ENCODE measurements at regions of chr6 and their contacts with region 1.

Region 1: DNA sequence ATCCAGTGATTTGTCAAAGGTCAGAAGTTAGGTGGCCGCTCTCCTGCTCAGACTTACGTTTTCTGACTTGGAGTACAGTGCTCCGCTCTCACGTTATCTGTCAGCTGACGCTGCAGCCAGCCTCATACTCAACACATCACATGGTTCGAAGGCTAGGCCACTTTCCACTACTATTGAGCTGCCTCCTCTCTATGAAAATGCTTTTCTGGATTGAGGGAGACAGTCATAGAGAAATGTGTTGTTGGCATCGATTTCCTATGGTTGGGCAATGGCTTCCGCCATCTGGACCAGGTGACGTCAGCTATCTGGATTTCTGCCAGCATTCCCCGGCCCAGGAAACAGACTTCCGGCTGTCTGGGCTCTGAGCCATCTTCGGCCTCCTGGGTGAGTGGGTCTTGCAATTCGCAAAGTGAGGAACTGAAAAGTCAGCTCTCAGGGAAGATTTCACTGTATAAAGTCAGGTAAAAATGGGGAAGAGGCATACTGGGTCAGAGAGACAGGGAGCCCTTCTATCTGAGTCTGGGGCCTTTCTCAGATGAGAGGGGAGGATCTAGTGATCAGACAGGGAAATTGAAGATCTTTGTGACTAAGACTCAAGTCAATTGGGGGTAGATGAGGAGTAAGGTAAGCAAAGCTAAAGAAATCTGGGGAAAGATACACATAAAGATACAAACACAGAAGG is 37.5 kb upstream of the IER3 start:
- DNase-seq: peak; percentile 86
- H3K4me3 ChIP-seq: no peak overlapping the region
- H3K27ac ChIP-seq: peak overlapping the region; percentile 82
- H3K4me1 ChIP-seq: peaks cover 24% of the 10 kb centered on the region
- H3K27me3 ChIP-seq: no peaks in the 10 kb centered on the region
- CTCF ChIP-seq: no peak
- POLR2A ChIP-seq: peak; percentile 42

Region 2: GRCh38 chr6:30626484-30627366 is 155.2 kb before region 1 on chr6 and contains the start of gene ATAT1:
- CTCF ChIA-PET with region 1: no interaction called
- POLR2A ChIA-PET with region 1: no interaction called
- dilution Hi-C with region 1: no loop called
- intact Hi-C with region 1: no loop called
- DNase-seq: peak; percentile 89
- H3K4me3 ChIP-seq: peak within 1 kb of the TSS; percentile 22 to 64 (median 51)
- H3K27ac ChIP-seq: peak within 1 kb of the TSS; percentile 66
- H3K4me1 ChIP-seq: peaks cover 8% of the 10 kb centered on the region
- H3K27me3 ChIP-seq: no peaks in the 10 kb centered on the region
- CTCF ChIP-seq: peak; percentile 31 to 50
- POLR2A ChIP-seq: peak; percentile 97
- total RNA-seq, gene ATAT1: 18.4 and 20.2 TPM in 2 replicates

Region 3: DNA sequence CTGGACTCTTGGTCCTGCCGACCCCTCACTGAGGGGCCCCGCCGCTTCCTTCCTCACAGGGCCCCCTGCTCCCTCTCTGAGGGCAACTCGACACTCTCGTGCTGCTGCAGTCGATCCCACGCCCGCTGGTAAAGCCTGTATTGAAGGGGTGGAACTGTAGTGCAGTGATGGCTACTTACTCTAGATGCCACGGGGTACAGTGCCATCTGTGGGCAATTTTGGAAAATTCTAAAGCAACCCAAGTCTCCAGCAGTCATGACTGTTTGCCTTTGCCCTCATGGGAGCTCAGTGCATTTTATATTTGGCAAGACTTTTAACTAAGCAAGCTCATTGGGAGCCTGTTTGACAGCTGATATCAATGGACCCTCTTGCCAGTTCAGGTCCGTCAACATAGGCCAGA is 141.4 kb before region 1 on chr6:
- CTCF ChIA-PET with region 1: no interaction called
- POLR2A ChIA-PET with region 1: no interaction called
- dilution Hi-C with region 1: no loop called
- intact Hi-C with region 1: no loop called
- DNase-seq: no peak
- H3K4me3 ChIP-seq: no peak overlapping the region
- H3K27ac ChIP-seq: no peak overlapping the region
- H3K4me1 ChIP-seq: no peaks in the 10 kb centered on the region
- H3K27me3 ChIP-seq: no peaks in the 10 kb centered on the region
- CTCF ChIP-seq: no peak
- POLR2A ChIP-seq: no peak

Region 4: DNA sequence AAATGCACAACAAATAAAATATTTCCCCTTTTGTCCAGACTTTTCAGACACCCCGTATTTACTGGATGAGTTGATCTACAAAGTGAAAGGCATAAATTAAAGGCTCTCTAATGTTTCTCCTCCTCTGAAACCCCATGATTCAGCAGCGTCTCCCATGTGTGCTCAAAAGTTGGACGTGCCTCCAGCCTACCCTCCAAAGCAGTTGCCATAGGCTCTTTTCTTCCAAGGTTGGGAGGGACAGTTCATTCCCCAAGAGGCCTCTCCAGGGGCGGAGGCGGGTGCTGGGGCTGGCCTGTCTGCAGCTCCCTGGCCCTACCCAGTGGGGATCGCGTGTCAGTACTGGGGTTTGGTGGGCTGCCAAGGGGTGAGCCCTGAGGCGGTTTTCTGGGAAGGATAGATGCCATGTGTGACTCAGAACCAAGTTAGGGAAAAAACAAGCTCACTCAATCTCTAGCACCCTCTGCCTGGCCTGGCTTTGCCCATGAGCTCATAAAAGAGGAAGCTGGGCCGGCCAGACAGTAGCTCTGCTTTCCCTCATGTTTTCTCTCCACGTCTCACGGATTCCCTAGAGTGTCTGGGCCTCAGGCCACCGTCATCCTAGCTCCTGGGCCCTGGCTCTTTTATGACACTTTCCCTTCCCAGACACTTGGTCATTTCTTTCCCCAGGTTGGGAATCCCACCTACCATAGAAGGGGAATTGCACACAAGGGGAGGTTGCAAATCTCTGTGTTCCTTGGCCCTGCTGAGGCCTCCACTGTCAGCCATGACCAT is 29.5 kb before region 1 on chr6:
- CTCF ChIA-PET with region 1: interaction called, 8 read pairs
- POLR2A ChIA-PET with region 1: interaction called, 7 read pairs
- dilution Hi-C with region 1: no loop called
- intact Hi-C with region 1: loop called (anchors 1 kb)
- DNase-seq: peak; percentile 99
- H3K4me3 ChIP-seq: no peak overlapping the region
- H3K27ac ChIP-seq: peak overlapping the region; percentile 96
- H3K4me1 ChIP-seq: peaks cover 54% of the 10 kb centered on the region
- H3K27me3 ChIP-seq: no peaks in the 10 kb centered on the region
- CTCF ChIP-seq: peak in 1 of 2 donors; percentile 9
- POLR2A ChIP-seq: peak; percentile 51

Region 5: GRCh38 chr6:30759575-30760239 is 22.2 kb before region 1 on chr6:
- CTCF ChIA-PET with region 1: interaction called, 6 read pairs
- POLR2A ChIA-PET with region 1: interaction called, 6 read pairs
- dilution Hi-C with region 1: no loop called
- intact Hi-C with region 1: loop called (anchors 1 kb)
- DNase-seq: peak; percentile 74
- H3K4me3 ChIP-seq: no peak overlapping the region
- H3K27ac ChIP-seq: peak overlapping the region; percentile 91
- H3K4me1 ChIP-seq: peaks cover 34% of the 10 kb centered on the region
- H3K27me3 ChIP-seq: no peaks in the 10 kb centered on the region
- CTCF ChIP-seq: no peak
- POLR2A ChIP-seq: no peak

Region 6: DNA sequence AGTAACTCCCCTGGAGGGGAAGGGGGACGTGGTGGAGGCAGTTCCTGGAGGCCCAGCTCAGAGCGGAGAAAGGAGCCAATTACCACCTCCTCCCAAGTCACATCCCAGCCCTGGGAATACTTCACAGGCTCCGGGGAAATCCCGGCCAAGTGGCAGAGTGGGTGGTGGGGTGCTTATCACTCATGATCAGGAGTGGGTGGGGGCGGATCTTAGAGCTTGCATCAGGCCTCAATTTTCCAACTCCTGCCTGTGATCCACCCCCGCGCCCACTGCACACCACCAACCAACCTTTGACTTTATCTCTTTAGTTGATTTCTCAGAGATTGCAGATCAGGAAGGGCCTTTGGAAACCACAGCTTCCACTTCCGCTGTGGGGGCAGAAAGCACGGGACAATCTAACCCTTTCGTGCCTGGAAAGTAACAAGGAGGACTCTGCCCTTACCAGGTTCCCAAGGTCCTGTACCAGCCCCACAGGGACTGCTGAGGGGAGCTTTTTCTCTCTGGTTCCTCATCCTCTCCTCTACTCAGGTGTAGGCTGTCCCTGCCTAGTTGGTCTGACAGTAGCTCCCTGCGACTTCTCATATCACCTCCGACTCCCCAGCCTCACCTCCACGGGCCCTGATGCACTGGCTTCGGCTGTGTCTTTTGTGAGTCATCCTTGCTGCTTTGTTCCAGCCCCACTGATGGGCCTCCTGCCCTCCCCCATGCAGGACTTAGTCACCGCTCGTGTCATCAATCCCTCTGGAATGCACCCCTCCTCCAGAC is 12.6 kb before region 1 on chr6:
- CTCF ChIA-PET with region 1: interaction called, 11 read pairs
- POLR2A ChIA-PET with region 1: interaction called, 6 read pairs
- dilution Hi-C with region 1: no loop called
- intact Hi-C with region 1: loop called (anchors 1 kb)
- DNase-seq: peak; percentile 94
- H3K4me3 ChIP-seq: peak overlapping the region in 1 of 3 experiments; percentile 35
- H3K27ac ChIP-seq: peak overlapping the region; percentile 96
- H3K4me1 ChIP-seq: peaks cover 29% of the 10 kb centered on the region
- H3K27me3 ChIP-seq: no peaks in the 10 kb centered on the region
- CTCF ChIP-seq: no peak
- POLR2A ChIP-seq: peak; percentile 63

Region 7: GRCh38 chr6:30814136-30815040 is 32.5 kb after region 1 on chr6:
- CTCF ChIA-PET with region 1: interaction called, 4 read pairs
- POLR2A ChIA-PET with region 1: no interaction called
- dilution Hi-C with region 1: no loop called
- intact Hi-C with region 1: loop called (anchors 1 kb)
- DNase-seq: peak; percentile 92
- H3K4me3 ChIP-seq: no peak overlapping the region
- H3K27ac ChIP-seq: peak overlapping the region; percentile 93
- H3K4me1 ChIP-seq: peaks cover 37% of the 10 kb centered on the region
- H3K27me3 ChIP-seq: no peaks in the 10 kb centered on the region
- CTCF ChIP-seq: no peak
- POLR2A ChIP-seq: no peak

Region 8: GRCh38 chr6:30821862-30822782 is 40.2 kb after region 1 on chr6:
- CTCF ChIA-PET with region 1: interaction called, 16 read pairs
- POLR2A ChIA-PET with region 1: no interaction called
- dilution Hi-C with region 1: no loop called
- intact Hi-C with region 1: no loop called
- DNase-seq: peak; percentile 75
- H3K4me3 ChIP-seq: no peak overlapping the region
- H3K27ac ChIP-seq: peak overlapping the region; percentile 21
- H3K4me1 ChIP-seq: peaks cover 36% of the 10 kb centered on the region
- H3K27me3 ChIP-seq: no peaks in the 10 kb centered on the region
- CTCF ChIP-seq: peak; percentile 49 to 52
- POLR2A ChIP-seq: no peak

Region 9: GRCh38 chr6:30862156-30862875 is 80.4 kb after region 1 on chr6:
- CTCF ChIA-PET with region 1: no interaction called
- POLR2A ChIA-PET with region 1: no interaction called
- dilution Hi-C with region 1: no loop called
- intact Hi-C with region 1: no loop called
- DNase-seq: peak; percentile 74
- H3K4me3 ChIP-seq: no peak overlapping the region
- H3K27ac ChIP-seq: no peak overlapping the region
- H3K4me1 ChIP-seq: no peaks in the 10 kb centered on the region
- H3K27me3 ChIP-seq: peaks cover 6 to 8% of the 10 kb centered on the region in 2 experiments
- CTCF ChIP-seq: no peak
- POLR2A ChIP-seq: no peak

Measured in endothelial cell of umbilical vein (primary cell).